Right lobe of liver (tissue), 6 donors: ENCODE measurements at regions of chr11 and their contacts with region 1.

Region 1: GRCh38 chr11:65817835-65818742 is 15.7 kb upstream of the SNX32 start:
- DNase-seq: peak; percentile 95 to 96 (median 95)
- ATAC-seq: peak; percentile 94 to 99 (median 96)
- H3K4me3 ChIP-seq: peak overlapping the region; percentile 53 to 80 (median 68)
- H3K27ac ChIP-seq: peak overlapping the region; percentile 78 to 83 (median 78)
- H3K4me1 ChIP-seq: no peaks in the 10 kb centered on the region
- H3K27me3 ChIP-seq: no peaks in the 10 kb centered on the region
- CTCF ChIP-seq: peak; percentile 98 to 100 (median 100)
- POLR2A ChIP-seq: peak; percentile 53

Region 2: DNA sequence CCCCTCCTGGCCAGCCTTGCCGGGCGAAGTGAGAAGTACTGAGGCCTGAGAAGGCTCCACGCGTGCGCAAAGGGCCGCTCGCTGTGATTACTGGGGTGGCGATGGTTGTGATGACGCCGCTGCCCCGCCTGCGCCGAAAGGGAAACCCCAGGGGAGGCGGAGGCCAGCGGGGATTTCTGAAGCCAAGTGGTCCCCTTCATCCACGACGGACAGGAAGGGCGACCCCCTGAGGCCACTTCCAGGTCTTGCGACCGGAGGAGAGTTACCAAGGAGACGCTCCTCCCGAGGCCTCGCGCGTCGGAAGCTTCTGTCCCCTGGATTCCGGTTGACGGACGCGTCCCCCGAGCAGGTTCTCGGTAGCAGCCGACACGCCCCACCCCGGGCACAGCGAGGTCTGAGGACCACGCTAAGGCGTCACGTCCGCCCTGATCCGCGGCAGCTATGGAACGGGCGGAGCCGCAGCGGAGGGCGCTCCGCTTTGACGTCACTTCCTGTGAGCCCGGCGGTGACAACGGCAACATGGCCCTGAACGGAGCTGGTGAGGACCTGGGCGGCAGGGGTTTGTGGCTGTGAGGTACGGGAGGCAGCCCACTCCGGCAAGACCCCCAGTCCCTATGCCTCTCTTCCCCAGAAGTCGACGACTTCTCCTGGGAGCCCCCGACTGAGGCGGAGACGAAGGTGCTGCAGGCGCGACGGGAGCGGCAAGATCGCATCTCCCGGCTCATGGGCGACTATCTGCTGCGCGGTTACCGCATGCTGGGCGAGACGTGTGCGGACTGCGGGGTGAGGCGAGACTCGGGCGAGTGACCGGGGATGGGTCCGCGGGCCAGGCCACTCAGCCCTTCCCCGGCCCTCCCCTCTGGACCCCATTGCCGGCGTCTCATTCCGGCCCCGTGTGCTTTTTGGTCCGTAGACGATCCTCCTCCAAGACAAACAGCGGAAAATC is 247.8 kb before region 1 on chr11 and contains the start of gene ZNRD2:
- intact Hi-C with region 1: no loop called
- DNase-seq: peak; percentile 98 to 100 (median 98)
- ATAC-seq: peak; percentile 74 to 83 (median 79)
- H3K4me3 ChIP-seq: peak within 1 kb of the TSS; percentile 86 to 99 (median 93)
- H3K27ac ChIP-seq: peak within 1 kb of the TSS; percentile 74 to 91 (median 83)
- H3K4me1 ChIP-seq: peaks cover 0 to 51% (median 20%) of the 10 kb centered on the region in 4 donors
- H3K27me3 ChIP-seq: no peaks in the 10 kb centered on the region
- CTCF ChIP-seq: peak; percentile 41 to 55 (median 43)
- POLR2A ChIP-seq: peak; percentile 68
- total RNA-seq, gene ZNRD2: 11.6 to 43.2 (median 16.5) TPM

Region 3: DNA sequence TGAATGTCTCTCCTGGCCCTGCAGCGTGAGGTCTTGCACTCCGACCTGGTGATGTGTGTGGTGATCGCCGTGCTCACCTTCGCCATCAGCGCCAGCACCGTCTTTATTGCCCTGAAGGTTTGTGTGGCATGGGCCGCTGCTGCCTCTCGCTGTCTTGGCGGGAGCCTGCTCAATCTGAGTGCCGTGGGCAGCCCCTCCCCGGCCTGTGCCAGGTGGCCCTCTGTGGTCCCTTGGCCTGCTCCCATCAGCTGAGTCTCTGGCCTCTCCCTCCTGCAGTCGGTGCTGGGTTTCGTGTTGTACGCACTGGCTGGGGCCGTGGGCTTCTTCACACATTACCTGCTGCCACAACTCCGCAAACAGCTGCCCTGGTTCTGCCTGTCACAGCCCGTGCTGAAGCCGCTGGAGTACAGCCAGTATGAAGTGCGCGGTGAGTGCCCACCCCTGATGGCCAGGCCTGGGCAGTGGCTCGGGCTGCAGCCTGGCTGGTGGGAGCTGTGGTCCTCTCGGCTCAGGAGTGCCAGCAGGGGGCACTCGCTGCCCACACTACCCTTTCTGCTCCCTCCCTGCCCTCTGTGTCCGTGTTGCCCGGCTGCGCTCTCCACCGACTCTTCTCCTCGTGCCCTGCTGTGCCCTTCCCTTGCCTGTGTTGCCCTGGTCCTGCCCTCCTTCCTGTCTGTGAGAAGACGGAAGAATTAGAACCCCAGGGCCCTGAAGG is 192.3 kb before region 1 on chr11:
- intact Hi-C with region 1: loop called (anchors 10 kb)
- DNase-seq: peak in 2 of 3 donors; percentile 63 to 76
- ATAC-seq: peak; percentile 80 to 91 (median 87)
- H3K4me3 ChIP-seq: no peak overlapping the region
- H3K27ac ChIP-seq: no peak overlapping the region
- H3K4me1 ChIP-seq: no peaks in the 10 kb centered on the region
- H3K27me3 ChIP-seq: no peaks in the 10 kb centered on the region
- CTCF ChIP-seq: peak; percentile 68 to 77 (median 70)
- POLR2A ChIP-seq: no peak

Region 4: DNA sequence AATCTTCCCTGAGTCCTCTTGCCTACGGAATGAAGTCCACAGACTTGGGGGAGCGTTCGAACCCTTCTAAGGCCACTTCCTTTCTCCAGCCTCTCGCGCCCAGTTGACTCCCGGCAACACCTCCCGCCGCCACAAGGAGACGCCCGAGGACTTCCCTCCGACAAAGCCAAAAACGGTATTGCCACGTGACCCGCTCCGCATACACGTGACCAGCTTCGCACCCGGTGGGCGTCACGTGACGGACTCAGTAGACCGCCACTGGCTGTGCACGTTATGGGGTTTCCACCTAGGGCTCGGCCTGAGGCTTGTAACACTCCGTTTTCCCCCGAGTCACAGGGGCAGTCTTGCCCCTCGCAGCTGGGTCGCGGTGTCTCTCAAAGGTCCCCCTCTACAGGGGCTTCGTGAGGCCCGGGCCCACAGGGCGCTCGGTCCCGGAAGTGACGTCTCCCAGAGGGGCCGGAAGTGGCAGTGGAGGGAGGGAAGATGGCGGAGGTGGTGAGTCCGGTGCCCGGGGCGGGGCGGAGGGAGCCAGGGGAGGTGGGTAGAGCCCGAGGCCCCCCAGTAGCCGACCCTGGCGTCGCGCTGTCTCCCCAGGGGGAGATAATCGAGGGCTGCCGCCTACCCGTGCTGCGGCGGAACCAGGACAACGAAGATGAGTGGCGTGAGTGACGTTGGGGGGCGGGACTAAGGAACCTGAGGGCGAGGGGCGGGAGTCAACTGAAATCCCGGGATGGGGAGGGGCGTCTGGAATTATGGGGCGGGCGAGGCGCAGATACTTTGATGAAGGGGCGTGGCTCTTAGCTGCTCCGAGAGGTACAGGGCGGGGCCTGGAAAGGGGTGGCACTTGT is 106.1 kb before region 1 on chr11 and contains the start of gene KAT5:
- intact Hi-C with region 1: loop called (anchors 5 to 10 kb)
- DNase-seq: peak; percentile 97 to 98 (median 98)
- ATAC-seq: peak; percentile 88 to 92 (median 90)
- H3K4me3 ChIP-seq: peak within 1 kb of the TSS; percentile 62 to 73 (median 70)
- H3K27ac ChIP-seq: peak within 1 kb of the TSS; percentile 97 to 98 (median 97)
- H3K4me1 ChIP-seq: peaks cover 0 to 16% (median 1%) of the 10 kb centered on the region in 4 donors
- H3K27me3 ChIP-seq: no peaks in the 10 kb centered on the region
- CTCF ChIP-seq: peak; percentile 94 to 99 (median 96)
- POLR2A ChIP-seq: peak; percentile 80
- total RNA-seq, gene KAT5: 17.8 to 30.4 (median 24.0) TPM

Region 5: GRCh38 chr11:66044757-66045156 is 226.7 kb after region 1 on chr11:
- intact Hi-C with region 1: no loop called
- DNase-seq: peak in 1 of 3 donors; percentile 22
- ATAC-seq: no peak
- H3K4me3 ChIP-seq: no peak overlapping the region
- H3K27ac ChIP-seq: no peak overlapping the region
- H3K4me1 ChIP-seq: no peaks in the 10 kb centered on the region
- H3K27me3 ChIP-seq: no peaks in the 10 kb centered on the region
- CTCF ChIP-seq: no peak
- POLR2A ChIP-seq: no peak